ENCODE measurements at regions of chr3 and their contacts with region 1.

Region 1: DNA sequence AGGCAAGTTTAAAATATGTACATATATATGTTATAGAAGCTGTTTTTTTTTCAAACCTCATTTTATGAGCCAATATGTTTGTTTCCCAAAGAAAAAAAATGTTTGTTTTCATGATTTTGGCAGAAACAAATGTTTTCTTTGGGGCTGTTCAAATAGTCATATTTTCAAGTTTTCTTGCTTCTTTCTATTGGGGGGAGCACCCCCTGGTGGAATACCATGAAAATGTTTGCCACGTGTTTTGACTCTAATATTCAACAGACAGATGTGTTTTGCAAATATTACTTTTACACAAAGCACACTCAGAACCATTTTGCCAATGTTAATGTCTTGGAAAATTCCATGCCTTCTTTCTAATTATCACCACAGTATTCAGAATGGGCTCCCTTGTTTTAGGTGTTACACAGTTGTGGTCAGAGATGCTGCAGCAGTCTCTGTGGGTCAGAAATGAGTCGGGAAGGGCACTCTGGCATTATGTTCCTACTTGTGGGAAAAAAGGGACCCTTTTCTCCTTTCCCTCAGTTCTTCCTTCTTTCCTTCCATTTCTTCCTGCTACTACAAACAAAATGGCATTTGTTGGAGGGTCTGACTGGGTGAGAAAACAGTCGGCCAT is 817.0 kb downstream of the TUSC7 start:
- DNase-seq: no peak
- ATAC-seq: peak; percentile 64
- H3K4me3 ChIP-seq: no peak overlapping the region
- H3K27ac ChIP-seq: no peak overlapping the region
- H3K4me1 ChIP-seq: no peaks in the 10 kb centered on the region
- H3K27me3 ChIP-seq: no peaks in the 10 kb centered on the region
- CTCF ChIP-seq: peak; percentile 56 to 61 (median 59)
- EP300 ChIP-seq: no peak
- POLR2A ChIP-seq: no peak
- RAD21 ChIP-seq: peak; percentile 84

Region 2: GRCh38 chr3:116863822-116864589 is 662.6 kb before region 1 on chr3:
- CTCF ChIA-PET with region 1: interaction called, 16 read pairs
- POLR2A ChIA-PET with region 1: no interaction called
- RAD21 ChIA-PET with region 1: interaction called, 3 read pairs
- SMC1A ChIA-PET with region 1: interaction called, 11 read pairs
- in situ Hi-C with region 1: no loop called
- intact Hi-C with region 1: loop called (anchors 1 kb)
- DNase-seq: peak; percentile 17
- ATAC-seq: peak; percentile 84
- H3K4me3 ChIP-seq: 0 out of 2 replicates have a peak overlapping the region, but pooled peaks have one; percentile 26
- H3K27ac ChIP-seq: no peak overlapping the region
- H3K4me1 ChIP-seq: no peaks in the 10 kb centered on the region
- H3K27me3 ChIP-seq: peaks cover 0 to 6% of the 10 kb centered on the region in 2 experiments; a peak in 1 of 4 replicates
- CTCF ChIP-seq: peak; percentile 45 to 64 (median 62); a peak in 5 of 6 replicates
- EP300 ChIP-seq: no peak
- POLR2A ChIP-seq: no peak
- RAD21 ChIP-seq: peak; percentile 92

Region 3: DNA sequence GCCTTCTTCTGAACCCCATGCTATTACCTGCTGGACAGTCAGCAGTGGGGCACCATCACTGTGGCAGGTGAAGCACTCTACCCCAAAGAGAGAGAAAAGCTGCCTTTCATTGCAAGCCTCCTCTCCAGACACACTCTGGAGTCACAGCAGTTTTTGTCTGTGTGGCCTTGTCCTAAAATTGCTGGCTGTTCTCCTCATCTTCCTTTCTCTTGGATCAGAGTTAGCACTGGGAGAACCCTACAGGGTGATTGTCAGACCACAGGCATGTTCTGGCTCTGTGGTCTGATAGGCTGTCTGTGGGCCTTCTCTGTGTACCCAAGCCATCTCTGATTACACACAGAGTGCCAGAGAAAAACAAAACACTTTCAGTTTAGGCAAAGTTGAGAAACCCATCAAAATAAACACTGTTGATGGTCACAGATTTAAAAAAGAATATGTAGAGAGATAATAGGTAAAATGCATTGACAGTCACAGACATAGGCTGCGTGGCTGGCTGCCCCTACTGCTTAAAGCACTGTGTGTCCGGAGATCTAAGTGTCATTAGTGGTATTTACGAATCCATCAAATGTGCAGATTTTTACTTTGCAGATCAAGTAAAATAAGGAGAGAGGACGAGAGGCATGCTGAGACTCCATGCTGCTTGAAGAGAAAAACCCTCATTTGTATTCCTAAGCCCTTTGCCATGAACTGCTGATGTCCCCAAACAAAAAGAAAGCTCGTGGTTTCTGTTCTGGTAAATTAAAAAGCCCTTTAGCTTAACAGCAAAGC is 127.1 kb before region 1 on chr3:
- CTCF ChIA-PET with region 1: interaction called, 17 read pairs
- POLR2A ChIA-PET with region 1: no interaction called
- RAD21 ChIA-PET with region 1: interaction called, 10 read pairs
- SMC1A ChIA-PET with region 1: interaction called, 187 read pairs
- in situ Hi-C with region 1: no loop called
- intact Hi-C with region 1: no loop called
- DNase-seq: no peak
- ATAC-seq: no peak
- H3K4me3 ChIP-seq: no peak overlapping the region
- H3K27ac ChIP-seq: no peak overlapping the region
- H3K4me1 ChIP-seq: no peaks in the 10 kb centered on the region
- H3K27me3 ChIP-seq: no peaks in the 10 kb centered on the region; a peak in 1 of 4 replicates
- CTCF ChIP-seq: no peak
- EP300 ChIP-seq: no peak
- POLR2A ChIP-seq: no peak
- RAD21 ChIP-seq: no peak

Region 4: GRCh38 chr3:117439812-117440211 is 86.8 kb before region 1 on chr3:
- CTCF ChIA-PET with region 1: interaction called, 11 read pairs
- POLR2A ChIA-PET with region 1: no interaction called
- RAD21 ChIA-PET with region 1: interaction called, 10 read pairs
- SMC1A ChIA-PET with region 1: interaction called, 37 read pairs
- in situ Hi-C with region 1: no loop called
- intact Hi-C with region 1: no loop called
- DNase-seq: no peak
- ATAC-seq: no peak
- H3K4me3 ChIP-seq: no peak overlapping the region
- H3K27ac ChIP-seq: no peak overlapping the region
- H3K4me1 ChIP-seq: no peaks in the 10 kb centered on the region
- H3K27me3 ChIP-seq: no peaks in the 10 kb centered on the region; a peak in 2 of 4 replicates
- CTCF ChIP-seq: no peak
- EP300 ChIP-seq: no peak
- POLR2A ChIP-seq: no peak
- RAD21 ChIP-seq: no peak

Region 5: GRCh38 chr3:117473981-117474538 is 52.5 kb before region 1 on chr3:
- CTCF ChIA-PET with region 1: interaction called, 16 read pairs
- POLR2A ChIA-PET with region 1: no interaction called
- RAD21 ChIA-PET with region 1: interaction called, 34 read pairs
- SMC1A ChIA-PET with region 1: interaction called, 49 read pairs
- in situ Hi-C with region 1: no loop called
- intact Hi-C with region 1: no loop called
- DNase-seq: no peak
- ATAC-seq: no peak
- H3K4me3 ChIP-seq: no peak overlapping the region
- H3K27ac ChIP-seq: no peak overlapping the region
- H3K4me1 ChIP-seq: no peaks in the 10 kb centered on the region
- H3K27me3 ChIP-seq: no peaks in the 10 kb centered on the region
- CTCF ChIP-seq: no peak
- EP300 ChIP-seq: no peak
- POLR2A ChIP-seq: no peak
- RAD21 ChIP-seq: no peak

Region 6: GRCh38 chr3:117499189-117499870 is 27.2 kb before region 1 on chr3:
- CTCF ChIA-PET with region 1: interaction called, 28 read pairs
- POLR2A ChIA-PET with region 1: no interaction called
- RAD21 ChIA-PET with region 1: interaction called, 10 read pairs
- SMC1A ChIA-PET with region 1: interaction called, 26 read pairs
- in situ Hi-C with region 1: no loop called
- intact Hi-C with region 1: no loop called
- DNase-seq: no peak
- ATAC-seq: peak; percentile 76
- H3K4me3 ChIP-seq: no peak overlapping the region
- H3K27ac ChIP-seq: no peak overlapping the region
- H3K4me1 ChIP-seq: no peaks in the 10 kb centered on the region
- H3K27me3 ChIP-seq: no peaks in the 10 kb centered on the region
- CTCF ChIP-seq: no peak
- EP300 ChIP-seq: no peak
- POLR2A ChIP-seq: no peak
- RAD21 ChIP-seq: no peak

Measured in GM12878 (cell line).